A673 (cell line): ENCODE measurements at regions of chr18 and their contacts with region 1.

Region 1: GRCh38 chr18:59402432-59403090 is 43.5 kb upstream of the LMAN1 start:
- DNase-seq: peak; percentile 96
- H3K4me3 ChIP-seq: no peak overlapping the region
- H3K27ac ChIP-seq: no peak overlapping the region
- H3K4me1 ChIP-seq: no peaks in the 10 kb centered on the region
- H3K27me3 ChIP-seq: no peaks in the 10 kb centered on the region
- CTCF ChIP-seq: peak; percentile 99

Region 2: DNA sequence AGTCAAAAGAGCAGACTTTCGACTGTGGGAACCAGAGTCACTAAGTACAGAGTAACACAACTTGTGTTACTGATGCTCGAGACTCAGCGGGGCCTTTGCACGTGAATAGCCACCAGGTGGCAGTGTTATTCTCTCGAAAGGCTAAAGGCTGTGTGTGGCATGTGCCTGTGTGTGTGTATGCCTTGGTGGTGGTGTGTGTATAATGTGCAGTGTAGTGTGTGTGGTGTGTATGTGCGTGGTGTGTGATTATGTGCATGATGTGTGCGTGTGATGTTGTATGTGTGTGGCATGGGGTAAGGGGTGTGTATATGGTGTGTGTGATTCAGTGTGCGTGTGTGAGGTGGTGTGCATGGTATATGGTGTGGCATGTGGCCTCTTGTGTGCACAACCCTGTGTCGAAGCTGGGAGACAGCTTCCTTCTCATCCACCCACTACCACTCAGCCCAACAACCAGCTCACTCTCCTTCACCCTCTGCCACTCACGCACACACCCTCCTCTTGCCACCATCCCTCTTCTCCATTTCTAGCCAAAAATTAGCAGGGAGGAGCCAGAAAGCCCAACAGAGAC is 620.9 kb before region 1 on chr18:
- CTCF ChIA-PET with region 1: no interaction called
- POLR2A ChIA-PET with region 1: no interaction called
- intact Hi-C with region 1: loop called (anchors 5 kb)
- DNase-seq: peak; percentile 93
- H3K4me3 ChIP-seq: no peak overlapping the region
- H3K27ac ChIP-seq: peak overlapping the region; percentile 28
- H3K4me1 ChIP-seq: peaks cover 34% of the 10 kb centered on the region
- H3K27me3 ChIP-seq: no peaks in the 10 kb centered on the region
- CTCF ChIP-seq: peak; percentile 97

Region 3: GRCh38 chr18:59200787-59201186 is 201.8 kb before region 1 on chr18:
- CTCF ChIA-PET with region 1: interaction called, 4 read pairs
- POLR2A ChIA-PET with region 1: no interaction called
- intact Hi-C with region 1: loop called (anchors 5 kb)
- DNase-seq: peak; percentile 61
- H3K4me3 ChIP-seq: no peak overlapping the region
- H3K27ac ChIP-seq: peak overlapping the region; percentile 9
- H3K4me1 ChIP-seq: peaks cover 50% of the 10 kb centered on the region
- H3K27me3 ChIP-seq: no peaks in the 10 kb centered on the region
- CTCF ChIP-seq: peak; percentile 53

Region 4: DNA sequence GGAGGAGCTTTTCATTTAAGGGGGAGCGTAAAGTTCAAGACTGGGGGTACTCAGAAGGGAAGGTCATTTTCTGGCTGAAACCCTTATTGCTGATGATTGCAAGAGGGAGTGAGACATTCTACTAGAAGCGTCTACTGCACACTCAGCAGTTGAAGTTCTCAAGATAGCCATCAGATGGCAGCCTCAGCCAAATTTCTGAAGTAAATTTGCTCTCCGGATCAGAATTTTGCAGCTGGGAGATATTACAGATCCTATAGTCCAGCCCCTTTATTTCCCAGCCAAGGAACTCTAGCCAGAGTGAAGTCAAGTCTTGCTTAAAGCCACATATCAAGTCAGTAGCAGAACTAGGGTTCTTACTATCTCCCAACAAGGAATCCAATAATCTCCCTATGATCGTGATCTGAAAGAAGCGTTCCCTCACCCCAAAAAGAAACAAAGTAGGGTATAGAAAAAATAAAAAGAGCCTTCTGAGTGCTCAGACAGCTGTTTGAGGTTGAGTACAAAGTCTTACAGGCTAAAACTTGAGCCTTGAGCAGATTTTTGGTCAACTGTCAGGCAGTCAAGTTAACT is 153.3 kb before region 1 on chr18:
- CTCF ChIA-PET with region 1: interaction called, 69 read pairs
- POLR2A ChIA-PET with region 1: interaction called, 3 read pairs
- intact Hi-C with region 1: loop called (anchors 2 kb)
- DNase-seq: peak; percentile 94
- H3K4me3 ChIP-seq: no peak overlapping the region
- H3K27ac ChIP-seq: peak overlapping the region; percentile 44
- H3K4me1 ChIP-seq: peaks cover 19% of the 10 kb centered on the region
- H3K27me3 ChIP-seq: no peaks in the 10 kb centered on the region
- CTCF ChIP-seq: peak; percentile 86

Region 5: DNA sequence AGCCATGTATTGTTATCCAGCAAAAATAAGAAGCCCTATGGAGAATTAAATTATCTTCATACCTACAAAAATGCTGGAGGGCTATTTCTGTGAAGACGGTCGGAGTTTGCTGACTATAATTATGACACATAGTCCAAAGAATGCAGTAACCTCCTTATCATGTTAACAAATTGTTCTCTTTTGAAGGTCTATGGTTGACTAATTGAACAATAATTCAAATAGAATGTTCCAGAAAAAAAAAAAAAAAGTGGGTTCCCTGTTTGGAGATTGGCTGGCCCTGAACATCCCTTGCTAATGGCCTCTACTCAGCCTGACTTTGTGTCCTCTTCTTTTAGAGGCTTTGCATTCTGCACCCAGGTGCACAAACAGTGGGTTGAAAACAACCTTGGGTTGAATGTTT is 377.4 kb after region 1 on chr18:
- CTCF ChIA-PET with region 1: no interaction called
- POLR2A ChIA-PET with region 1: no interaction called
- intact Hi-C with region 1: no loop called
- DNase-seq: no peak
- H3K4me3 ChIP-seq: no peak overlapping the region
- H3K27ac ChIP-seq: no peak overlapping the region
- H3K4me1 ChIP-seq: no peaks in the 10 kb centered on the region
- H3K27me3 ChIP-seq: no peaks in the 10 kb centered on the region
- CTCF ChIP-seq: no peak

Region 6: GRCh38 chr18:60120231-60120750 is 717.7 kb after region 1 on chr18:
- CTCF ChIA-PET with region 1: no interaction called
- POLR2A ChIA-PET with region 1: no interaction called
- intact Hi-C with region 1: no loop called
- DNase-seq: no peak
- H3K4me3 ChIP-seq: no peak overlapping the region
- H3K27ac ChIP-seq: no peak overlapping the region
- H3K4me1 ChIP-seq: no peaks in the 10 kb centered on the region
- H3K27me3 ChIP-seq: peaks cover 7% of the 10 kb centered on the region
- CTCF ChIP-seq: no peak